Caco-2 (cell line): ENCODE measurements at regions of chr7 and their contacts with region 1.

Region 1: GRCh38 chr7:121547544-121548092 is 151.5 kb upstream of the FAM3C start:
- DNase-seq: peak in 1 of 2 experiments; percentile 20
- H3K4me3 ChIP-seq: no peak overlapping the region
- H3K4me3 Mint-ChIP-seq: no peak overlapping the region
- H3K27ac Mint-ChIP-seq: no peak overlapping the region
- H3K4me1 ChIP-seq: peaks cover 11% of the 10 kb centered on the region; the same call in 1 of the 2 replicates
- H3K4me1 Mint-ChIP-seq: no peaks in the 10 kb centered on the region
- H3K27me3 ChIP-seq: no peaks in the 10 kb centered on the region
- H3K27me3 Mint-ChIP-seq: peaks cover 3% of the 10 kb centered on the region
- CTCF ChIP-seq: peak; percentile 67 to 74

Region 2: DNA sequence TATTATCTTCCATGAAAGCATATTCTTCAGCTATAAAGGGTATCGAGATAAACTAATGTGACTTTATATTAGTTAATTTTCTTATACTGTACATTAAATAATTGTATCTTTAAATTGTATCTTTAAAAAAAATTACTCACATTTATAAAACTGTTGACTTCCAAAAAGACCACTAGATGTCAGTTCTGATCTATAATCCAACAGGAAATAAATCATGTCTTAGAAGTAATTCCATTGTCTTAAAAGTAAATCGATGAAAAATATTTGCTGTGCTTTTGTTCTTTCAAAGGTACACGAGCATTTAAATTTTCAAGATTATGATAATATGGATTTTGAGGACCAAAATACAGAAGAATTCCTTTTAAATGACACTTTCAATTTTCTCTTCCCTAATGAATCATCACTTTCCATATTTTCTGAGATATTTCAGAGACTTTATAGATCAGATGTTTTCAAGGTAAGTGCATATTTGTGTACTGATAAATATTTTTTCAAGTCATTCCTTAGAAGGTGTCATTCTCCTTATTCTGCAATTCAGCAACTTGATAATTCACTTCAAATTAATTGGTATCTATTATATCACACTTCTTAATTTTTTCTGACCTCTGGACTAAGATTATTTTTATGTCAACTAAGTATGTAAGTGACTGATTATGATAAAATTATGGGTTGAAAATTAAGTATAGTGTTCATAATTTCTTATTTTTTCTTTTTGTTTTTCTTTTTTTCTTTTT is 420.6 kb before region 1 on chr7:
- CTCF ChIA-PET with region 1: no interaction called
- POLR2A ChIA-PET with region 1: no interaction called
- intact Hi-C with region 1: loop called (anchors 1 kb)
- DNase-seq: no peak
- H3K4me3 ChIP-seq: no peak overlapping the region
- H3K4me3 Mint-ChIP-seq: no peak overlapping the region
- H3K27ac Mint-ChIP-seq: no peak overlapping the region
- H3K4me1 ChIP-seq: no peaks in the 10 kb centered on the region
- H3K4me1 Mint-ChIP-seq: no peaks in the 10 kb centered on the region
- H3K27me3 ChIP-seq: no peaks in the 10 kb centered on the region
- H3K27me3 Mint-ChIP-seq: no peaks in the 10 kb centered on the region
- CTCF ChIP-seq: no peak

Region 3: DNA sequence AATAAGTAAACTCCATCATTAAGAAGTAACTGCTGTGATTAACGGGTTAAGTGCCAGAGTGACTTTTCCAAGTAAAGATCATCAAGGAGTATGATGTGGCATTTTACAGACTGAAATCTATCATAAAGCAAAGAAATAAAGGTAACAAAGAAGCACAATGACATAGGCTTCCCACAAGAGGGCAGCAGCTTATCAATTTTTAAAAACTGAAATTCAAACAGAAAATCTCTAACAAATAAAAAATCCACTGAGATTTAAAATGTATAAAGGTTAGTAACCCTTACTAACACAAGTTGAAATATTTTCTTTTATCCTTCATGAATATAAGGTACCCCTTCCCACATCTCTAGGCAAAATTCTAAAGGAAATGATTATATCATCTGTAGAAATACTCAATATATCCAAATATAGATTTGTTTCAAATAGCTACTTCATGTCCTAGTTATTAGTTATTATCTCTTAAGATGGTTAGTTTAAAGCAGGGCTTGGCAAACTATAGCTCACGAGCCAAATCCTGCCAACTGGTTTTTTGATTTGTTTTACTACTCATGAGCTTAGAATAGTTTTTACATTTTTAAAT is 180.7 kb before region 1 on chr7:
- CTCF ChIA-PET with region 1: interaction called, 10 read pairs
- POLR2A ChIA-PET with region 1: no interaction called
- intact Hi-C with region 1: loop called (anchors 1 kb)
- DNase-seq: peak in 1 of 2 experiments; percentile 28
- H3K4me3 ChIP-seq: no peak overlapping the region
- H3K4me3 Mint-ChIP-seq: no peak overlapping the region
- H3K27ac Mint-ChIP-seq: no peak overlapping the region
- H3K4me1 ChIP-seq: no peaks in the 10 kb centered on the region
- H3K4me1 Mint-ChIP-seq: no peaks in the 10 kb centered on the region
- H3K27me3 ChIP-seq: no peaks in the 10 kb centered on the region
- H3K27me3 Mint-ChIP-seq: no peaks in the 10 kb centered on the region
- CTCF ChIP-seq: peak; percentile 55 to 67

Region 4: GRCh38 chr7:121530227-121531174 is 17.1 kb before region 1 on chr7:
- CTCF ChIA-PET with region 1: no interaction called
- POLR2A ChIA-PET with region 1: no interaction called
- intact Hi-C with region 1: no loop called
- DNase-seq: no peak
- H3K4me3 ChIP-seq: no peak overlapping the region
- H3K4me3 Mint-ChIP-seq: no peak overlapping the region
- H3K27ac Mint-ChIP-seq: no peak overlapping the region
- H3K4me1 ChIP-seq: no peaks in the 10 kb centered on the region
- H3K4me1 Mint-ChIP-seq: no peaks in the 10 kb centered on the region
- H3K27me3 ChIP-seq: no peaks in the 10 kb centered on the region
- H3K27me3 Mint-ChIP-seq: peaks cover 7% of the 10 kb centered on the region
- CTCF ChIP-seq: no peak